ENCODE measurements at regions of chr3 and their contacts with region 1.

Region 1: GRCh38 chr3:12135029-12135657 is 23.6 kb downstream of the TIMP4 start:
- DNase-seq: peak; percentile 56 to 84 (median 77)
- H3K4me3 ChIP-seq: no peak overlapping the region
- H3K27ac ChIP-seq: no peak overlapping the region
- H3K4me1 ChIP-seq: peaks cover 4% of the 10 kb centered on the region
- H3K27me3 ChIP-seq: no peaks in the 10 kb centered on the region
- CTCF ChIP-seq: peak; percentile 82 to 91 (median 89)
- EP300 ChIP-seq: no peak
- POLR2A ChIP-seq: no peak

Region 2: DNA sequence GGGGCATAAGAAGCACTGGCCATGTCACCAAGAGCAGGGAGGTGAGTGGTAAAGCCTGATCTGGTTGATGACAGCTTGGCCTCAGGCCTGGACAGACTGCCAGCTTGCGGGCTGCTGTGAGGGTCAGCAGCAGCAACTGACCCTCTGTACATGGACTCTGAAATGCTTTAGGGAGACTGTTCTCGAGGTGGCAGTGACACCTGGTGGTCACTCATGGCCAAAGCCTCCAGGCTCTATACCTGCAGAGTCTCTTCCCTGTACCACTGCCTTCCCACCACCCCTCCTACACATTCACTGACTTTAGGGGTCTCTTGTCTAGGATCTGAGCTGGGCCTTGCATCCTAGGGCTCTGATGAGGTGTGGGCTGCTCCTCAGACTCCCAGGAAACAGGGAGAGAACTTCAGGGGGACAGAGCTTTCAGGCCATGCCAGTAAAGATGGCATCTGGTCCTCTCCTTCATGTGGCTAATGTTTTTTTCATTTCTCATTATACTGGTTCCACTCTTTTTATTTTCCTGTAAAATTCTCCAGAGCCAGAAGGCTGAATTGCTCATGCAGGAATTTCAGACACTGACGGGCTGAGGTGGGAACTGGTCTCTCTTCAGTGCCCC is 40.8 kb after region 1 on chr3:
- intact Hi-C with region 1: loop called in 3 of 4 experiments (anchors 1 to 5 kb)
- DNase-seq: peak; percentile 48 to 76 (median 62)
- H3K4me3 ChIP-seq: no peak overlapping the region
- H3K27ac ChIP-seq: no peak overlapping the region
- H3K4me1 ChIP-seq: peaks cover 8% of the 10 kb centered on the region
- H3K27me3 ChIP-seq: no peaks in the 10 kb centered on the region
- CTCF ChIP-seq: peak; percentile 19 to 68 (median 59)
- EP300 ChIP-seq: no peak
- POLR2A ChIP-seq: no peak

Region 3: DNA sequence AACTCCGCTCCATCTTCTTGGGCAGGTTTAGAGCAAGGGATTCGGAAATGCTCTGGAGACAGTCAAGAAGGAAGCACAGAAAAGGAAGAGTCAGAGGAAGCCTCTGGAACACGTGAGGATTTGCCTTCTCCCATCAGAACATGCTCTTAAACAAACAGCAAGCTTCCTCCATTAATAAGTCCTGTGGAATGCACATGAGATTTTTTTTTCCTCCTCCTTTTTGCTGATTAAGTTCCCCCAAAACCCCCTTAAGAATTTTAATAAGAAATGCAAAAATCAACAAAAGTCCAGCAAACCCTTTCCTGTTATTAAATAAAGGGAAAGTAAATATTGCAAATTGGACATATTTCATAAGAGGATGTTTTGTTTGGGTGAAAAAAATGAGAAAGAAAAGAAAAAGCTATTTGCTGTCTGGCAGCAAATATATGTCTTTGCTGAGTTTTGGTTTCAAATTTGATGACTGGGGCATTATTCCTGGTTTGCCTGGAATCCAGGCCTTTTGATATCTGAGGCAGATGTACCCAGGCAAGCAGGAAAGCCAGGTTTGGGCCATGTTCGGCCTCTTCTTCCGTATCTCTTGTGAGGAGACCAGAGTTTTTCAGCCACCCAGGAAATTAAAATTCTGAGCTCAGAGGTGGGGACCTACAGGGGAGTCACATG is 341.2 kb after region 1 on chr3:
- intact Hi-C with region 1: loop called (anchors 2 to 5 kb)
- DNase-seq: no peak
- H3K4me3 ChIP-seq: no peak overlapping the region
- H3K27ac ChIP-seq: peak overlapping the region in 1 of 2 donors; percentile 28
- H3K4me1 ChIP-seq: peaks cover 6% of the 10 kb centered on the region
- H3K27me3 ChIP-seq: no peaks in the 10 kb centered on the region
- CTCF ChIP-seq: no peak
- EP300 ChIP-seq: no peak
- POLR2A ChIP-seq: no peak

Region 4: GRCh38 chr3:12719984-12720898 is 585.1 kb after region 1 on chr3:
- intact Hi-C with region 1: loop called in 1 of 4 experiments (anchors 10 kb)
- DNase-seq: peak; percentile 69 to 85 (median 74)
- H3K4me3 ChIP-seq: peak overlapping the region; percentile 31
- H3K27ac ChIP-seq: no peak overlapping the region
- H3K4me1 ChIP-seq: no peaks in the 10 kb centered on the region
- H3K27me3 ChIP-seq: no peaks in the 10 kb centered on the region
- CTCF ChIP-seq: peak; percentile 87 to 89 (median 87)
- EP300 ChIP-seq: no peak
- POLR2A ChIP-seq: no peak

Measured in ovary (tissue), 10 donors.